CD4-positive, alpha-beta memory T cell (primary cell): ENCODE measurements at regions of chr4 and their contacts with region 1.

Region 1: DNA sequence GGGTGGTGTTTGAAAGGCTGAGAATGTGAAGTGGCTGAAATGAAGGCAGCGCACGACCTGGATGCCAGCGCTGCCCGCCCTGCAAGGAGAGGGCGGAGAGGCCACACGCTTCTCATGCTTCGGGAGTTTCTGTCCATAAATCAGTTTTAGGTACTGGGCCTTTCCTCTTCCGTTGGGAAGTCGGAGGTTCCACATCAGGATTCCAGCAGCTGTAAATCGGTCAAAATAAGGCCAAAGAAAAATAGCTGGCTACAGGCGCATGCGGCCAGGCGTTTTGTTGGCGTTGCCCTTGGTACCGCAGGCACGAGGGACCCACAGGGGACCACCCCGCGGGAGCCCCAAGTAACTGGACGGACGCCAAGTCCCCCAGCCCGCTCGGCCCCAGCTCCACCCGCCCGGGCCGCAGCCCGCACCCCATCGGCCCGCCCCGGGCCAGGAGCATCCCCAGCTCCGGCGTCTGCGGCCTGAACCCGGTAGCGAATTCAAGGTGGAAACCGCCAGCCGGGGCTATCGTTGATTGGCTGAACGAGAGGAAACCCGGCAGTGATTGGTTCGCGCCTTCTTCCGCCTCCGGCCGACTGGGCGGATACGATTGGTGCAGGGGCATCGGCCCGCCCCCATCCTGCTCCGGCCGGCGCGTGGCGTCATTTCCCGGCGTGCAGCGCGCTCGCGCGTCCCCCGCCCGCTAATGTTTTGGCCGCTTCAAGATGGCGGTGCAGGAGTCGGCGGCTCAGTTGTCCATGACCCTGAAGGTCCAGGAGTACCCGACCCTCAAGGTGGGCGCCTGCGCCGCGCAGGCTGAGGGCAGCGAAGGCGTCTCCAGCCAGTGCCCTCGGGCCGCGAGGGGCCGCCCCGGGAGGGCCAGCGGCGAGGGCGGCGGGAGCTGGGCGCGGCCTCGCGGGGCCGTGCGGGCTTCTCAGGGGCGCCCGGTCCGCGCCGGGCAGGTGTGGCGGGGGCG is at the start of gene MAEA:
- DNase-seq: peak; percentile 97
- H3K4me3 ChIP-seq: peak within 1 kb of the TSS; percentile 78 to 86
- H3K4me3 Mint-ChIP-seq: peak within 1 kb of the TSS; percentile 90 to 94 (median 92)
- H3K27ac ChIP-seq: peak within 1 kb of the TSS; percentile 76
- H3K27ac Mint-ChIP-seq: peak within 1 kb of the TSS; percentile 82 to 97 (median 95)
- H3K4me1 ChIP-seq: peaks cover 49% of the 10 kb centered on the region
- H3K4me1 Mint-ChIP-seq: peaks cover 25 to 48% (median 39%) of the 10 kb centered on the region in 4 donors
- H3K27me3 ChIP-seq: no peaks in the 10 kb centered on the region
- H3K27me3 Mint-ChIP-seq: no peaks in the 10 kb centered on the region
- total RNA-seq, gene MAEA: 101 to 106 TPM

Region 2: GRCh38 chr4:1274871-1275440 is 14.5 kb before region 1 on chr4:
- CTCF ChIA-PET with region 1: no interaction called
- POLR2A ChIA-PET with region 1: no interaction called
- intact Hi-C with region 1: no loop called
- DNase-seq: no peak
- H3K4me3 ChIP-seq: no peak overlapping the region
- H3K4me3 Mint-ChIP-seq: no peak overlapping the region
- H3K27ac ChIP-seq: no peak overlapping the region
- H3K27ac Mint-ChIP-seq: no peak overlapping the region
- H3K4me1 ChIP-seq: no peaks in the 10 kb centered on the region
- H3K4me1 Mint-ChIP-seq: no peaks in the 10 kb centered on the region
- H3K27me3 ChIP-seq: no peaks in the 10 kb centered on the region
- H3K27me3 Mint-ChIP-seq: no peaks in the 10 kb centered on the region

Region 3: GRCh38 chr4:1309261-1310010 is 19.9 kb after region 1 on chr4:
- CTCF ChIA-PET with region 1: interaction called, 3 read pairs
- POLR2A ChIA-PET with region 1: interaction called, 7 read pairs
- intact Hi-C with region 1: loop called (anchors 2 kb)
- DNase-seq: peak in 4 of 5 donors; percentile 34 to 72 (median 42)
- H3K4me3 ChIP-seq: peak overlapping the region; percentile 33 to 39
- H3K4me3 Mint-ChIP-seq: peak overlapping the region; percentile 51 to 84 (median 80)
- H3K27ac ChIP-seq: peak overlapping the region; percentile 36
- H3K27ac Mint-ChIP-seq: peak overlapping the region; percentile 61 to 89 (median 83)
- H3K4me1 ChIP-seq: peaks cover 64% of the 10 kb centered on the region
- H3K4me1 Mint-ChIP-seq: peaks cover 48 to 77% (median 62%) of the 10 kb centered on the region in 4 donors
- H3K27me3 ChIP-seq: no peaks in the 10 kb centered on the region
- H3K27me3 Mint-ChIP-seq: no peaks in the 10 kb centered on the region